ENCODE measurements at regions of chr10 and their contacts with region 1.

Region 1: DNA sequence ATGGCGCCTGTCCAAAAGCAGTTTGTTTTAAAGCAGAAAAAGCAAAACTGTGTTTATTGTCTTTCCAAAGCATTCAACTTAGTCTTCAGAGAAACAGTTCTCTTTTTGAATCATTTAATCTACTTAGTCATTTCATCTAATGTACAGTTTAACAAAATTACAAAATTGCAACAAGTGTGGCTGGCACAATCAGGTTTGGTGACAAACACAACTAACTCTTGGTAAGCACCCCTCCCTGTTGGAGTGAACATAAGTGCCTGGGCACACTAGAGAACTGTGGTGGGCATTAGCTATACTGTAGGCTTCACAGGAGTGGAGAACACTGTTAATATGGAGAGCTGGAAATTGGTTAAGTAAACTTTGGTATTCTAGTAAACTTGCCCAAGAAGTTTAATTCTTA is 6.9 kb downstream of the CREM start:
- DNase-seq: no peak
- ATAC-seq: no peak
- H3K4me3 Mint-ChIP-seq: peak overlapping the region; percentile 12
- H3K27ac Mint-ChIP-seq: peak overlapping the region; percentile 91
- H3K4me1 Mint-ChIP-seq: peaks cover 59% of the 10 kb centered on the region
- H3K27me3 Mint-ChIP-seq: no peaks in the 10 kb centered on the region

Region 2: DNA sequence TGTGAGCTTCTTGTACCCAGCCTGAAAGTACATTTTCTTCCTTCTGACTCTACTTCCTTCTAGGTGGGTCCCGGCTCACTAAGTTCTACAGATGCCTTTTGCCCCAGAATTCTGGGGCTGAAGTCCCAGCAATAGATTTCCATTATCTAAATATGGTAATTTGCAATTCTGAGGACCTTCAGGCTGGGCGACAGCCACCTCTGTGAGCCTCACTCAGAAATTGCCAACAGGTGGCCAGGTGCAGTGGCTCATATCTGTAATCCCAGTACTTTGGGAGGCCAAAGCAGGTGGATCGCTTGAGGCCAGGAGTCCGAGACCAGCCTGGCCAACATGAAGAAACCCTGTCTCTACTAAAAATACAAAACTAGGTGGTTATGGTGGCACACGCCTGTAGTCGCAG is 16.7 kb after region 1 on chr10:
- CTCF ChIA-PET with region 1: interaction called, 10 read pairs
- DNase-seq: no peak
- ATAC-seq: no peak
- H3K4me3 Mint-ChIP-seq: peak overlapping the region; percentile 38
- H3K27ac Mint-ChIP-seq: peak overlapping the region; percentile 80
- H3K4me1 Mint-ChIP-seq: peaks cover 56% of the 10 kb centered on the region
- H3K27me3 Mint-ChIP-seq: no peaks in the 10 kb centered on the region

Measured in activated CD8-positive, alpha-beta memory T cell treated with anti-CD3 and anti-CD28 coated beads, Interleukin-2, amount 10 ng/mL, durations not matched to agents 7 days and 5 days (primary cell).